Activated CD4-positive, alpha-beta memory T cell treated with anti-CD3 and anti-CD28 coated beads, Interleukin-2, amount 10 ng/mL, durations not matched to agents 7 days and 5 days (primary cell): ENCODE measurements at regions of chr16 and their contacts with region 1.

Region 1: GRCh38 chr16:66608241-66609138 is 4.0 kb downstream of the CMTM3 start:
- DNase-seq: peak; percentile 82
- H3K4me3 Mint-ChIP-seq: peak overlapping the region; percentile 17
- H3K27ac Mint-ChIP-seq: peak overlapping the region; percentile 75
- H3K4me1 Mint-ChIP-seq: peaks cover 44% of the 10 kb centered on the region
- H3K27me3 Mint-ChIP-seq: no peaks in the 10 kb centered on the region

Region 2: GRCh38 chr16:66521951-66522771 is 86.3 kb before region 1 on chr16:
- CTCF ChIA-PET with region 1: interaction called, 8 read pairs
- POLR2A ChIA-PET with region 1: interaction called, 39 read pairs
- DNase-seq: peak; percentile 97
- H3K4me3 Mint-ChIP-seq: peak overlapping the region; percentile 64
- H3K27ac Mint-ChIP-seq: peak overlapping the region; percentile 95
- H3K4me1 Mint-ChIP-seq: peaks cover 95% of the 10 kb centered on the region
- H3K27me3 Mint-ChIP-seq: no peaks in the 10 kb centered on the region

Region 3: DNA sequence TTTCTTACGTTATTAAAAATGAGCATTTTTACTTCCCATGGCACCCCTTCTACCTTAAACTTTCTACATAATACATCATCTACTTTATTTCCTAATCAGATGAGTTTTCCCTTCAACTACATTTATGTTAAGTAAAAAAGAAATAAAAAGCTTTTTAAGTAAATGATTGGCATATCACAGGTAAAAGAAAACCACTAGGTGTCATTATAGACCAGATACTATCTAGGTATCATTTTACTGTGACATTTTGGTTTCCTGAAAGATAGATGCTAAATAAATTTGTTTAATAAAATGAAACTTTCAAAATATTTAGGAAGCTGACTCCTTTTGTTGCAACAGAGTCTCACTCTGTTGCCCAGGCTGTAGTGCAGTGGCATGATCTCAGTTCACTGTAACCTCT is 46.1 kb before region 1 on chr16:
- CTCF ChIA-PET with region 1: interaction called, 44 read pairs
- POLR2A ChIA-PET with region 1: interaction called, 20 read pairs
- DNase-seq: no peak
- H3K4me3 Mint-ChIP-seq: no peak overlapping the region
- H3K27ac Mint-ChIP-seq: peak overlapping the region; percentile 59
- H3K4me1 Mint-ChIP-seq: peaks cover 69% of the 10 kb centered on the region
- H3K27me3 Mint-ChIP-seq: no peaks in the 10 kb centered on the region

Region 4: GRCh38 chr16:66596986-66597848 is 11.3 kb before region 1 on chr16:
- CTCF ChIA-PET with region 1: interaction called, 33 read pairs
- POLR2A ChIA-PET with region 1: interaction called, 9 read pairs
- DNase-seq: peak; percentile 38
- H3K4me3 Mint-ChIP-seq: peak overlapping the region; percentile 57
- H3K27ac Mint-ChIP-seq: peak overlapping the region; percentile 99
- H3K4me1 Mint-ChIP-seq: peaks cover 50% of the 10 kb centered on the region
- H3K27me3 Mint-ChIP-seq: no peaks in the 10 kb centered on the region

Region 5: DNA sequence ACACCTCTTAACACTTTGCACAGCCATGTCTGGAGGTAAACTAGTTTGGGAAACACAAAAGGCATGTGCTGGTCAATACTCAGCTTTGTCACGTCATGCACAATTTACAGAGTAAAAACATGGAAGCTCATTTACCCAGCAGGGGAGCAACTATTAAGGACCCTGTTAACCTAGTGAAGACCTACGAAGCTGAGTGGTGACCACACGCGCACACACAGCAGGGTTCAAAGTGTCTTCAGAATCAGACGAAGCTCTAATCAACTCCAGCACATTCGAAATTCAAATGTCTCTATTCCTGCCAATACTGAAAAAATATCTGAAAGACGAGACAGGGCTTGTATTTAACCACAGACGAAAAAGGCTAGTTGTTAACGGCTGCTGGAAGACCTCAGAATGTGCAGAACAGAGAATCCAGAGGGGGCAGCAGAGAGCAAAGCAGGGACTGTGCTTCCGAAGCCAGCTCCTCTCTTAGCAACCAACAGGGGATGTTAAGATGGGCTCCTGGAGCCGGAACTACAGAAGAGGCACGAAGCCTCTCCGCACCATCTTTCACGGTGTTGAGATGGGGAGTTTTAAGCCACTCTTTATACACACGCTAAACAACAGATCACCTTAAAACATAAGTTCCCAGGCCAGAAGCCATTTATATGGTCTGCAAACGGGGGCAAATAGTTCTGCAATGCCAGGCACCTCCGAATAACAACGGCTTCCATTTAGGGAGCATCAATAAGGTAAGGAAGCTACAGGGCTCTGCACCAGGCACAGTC is 42.4 kb after region 1 on chr16:
- CTCF ChIA-PET with region 1: interaction called, 35 read pairs
- POLR2A ChIA-PET with region 1: interaction called, 3 read pairs
- DNase-seq: peak; percentile 82
- H3K4me3 Mint-ChIP-seq: peak overlapping the region; percentile 38
- H3K27ac Mint-ChIP-seq: no peak overlapping the region
- H3K4me1 Mint-ChIP-seq: peaks cover 16% of the 10 kb centered on the region
- H3K27me3 Mint-ChIP-seq: peaks cover 6% of the 10 kb centered on the region